Cardiac septum (tissue), 1 donor: ENCODE measurements at regions of chr3 and their contacts with region 1.

Region 1: GRCh38 chr3:139561959-139562676 is 22.6 kb upstream of the RBP1 start:
- DNase-seq: no peak

Region 2: GRCh38 chr3:139427283-139427993 is 134.7 kb before region 1 on chr3:
- intact Hi-C with region 1: loop called (anchors 1 kb)
- DNase-seq: no peak

Region 3: DNA sequence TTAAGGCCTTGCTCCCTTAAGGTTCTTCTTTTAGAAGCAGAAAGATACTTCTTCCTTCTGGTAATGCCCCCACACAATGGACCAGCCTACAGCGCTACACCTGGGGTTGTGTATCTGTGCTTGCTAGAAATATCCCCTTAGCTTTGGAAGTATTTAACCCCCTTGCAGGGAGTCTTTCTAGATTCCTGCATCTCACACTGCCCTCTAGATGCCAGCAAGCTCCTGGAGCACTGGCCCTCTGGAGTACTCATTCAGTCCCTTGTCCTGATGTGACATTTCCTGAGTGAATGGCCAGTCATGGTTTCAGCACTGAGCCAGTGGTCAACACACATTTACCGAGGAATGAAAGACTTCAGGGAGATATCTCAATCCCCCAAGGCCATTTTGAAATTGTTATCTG is 55.4 kb before region 1 on chr3:
- intact Hi-C with region 1: no loop called
- DNase-seq: no peak